ENCODE measurements at regions of chr17 and their contacts with region 1.

Region 1: GRCh38 chr17:60720763-60721531 is 43.3 kb downstream of the BCAS3 start:
- DNase-seq: peak; percentile 34
- H3K4me3 Mint-ChIP-seq: no peak overlapping the region
- H3K27ac Mint-ChIP-seq: no peak overlapping the region
- H3K4me1 Mint-ChIP-seq: peaks cover 8% of the 10 kb centered on the region
- H3K27me3 Mint-ChIP-seq: no peaks in the 10 kb centered on the region
- CTCF ChIP-seq: peak; percentile 66

Region 2: GRCh38 chr17:60678125-60678458 is 42.9 kb before region 1 on chr17:
- CTCF ChIA-PET with region 1: no interaction called
- intact Hi-C with region 1: no loop called
- DNase-seq: no peak
- H3K4me3 Mint-ChIP-seq: peak overlapping the region; percentile 99
- H3K27ac Mint-ChIP-seq: peak overlapping the region; percentile 72
- H3K4me1 Mint-ChIP-seq: no peaks in the 10 kb centered on the region
- H3K27me3 Mint-ChIP-seq: no peaks in the 10 kb centered on the region
- CTCF ChIP-seq: no peak

Region 3: DNA sequence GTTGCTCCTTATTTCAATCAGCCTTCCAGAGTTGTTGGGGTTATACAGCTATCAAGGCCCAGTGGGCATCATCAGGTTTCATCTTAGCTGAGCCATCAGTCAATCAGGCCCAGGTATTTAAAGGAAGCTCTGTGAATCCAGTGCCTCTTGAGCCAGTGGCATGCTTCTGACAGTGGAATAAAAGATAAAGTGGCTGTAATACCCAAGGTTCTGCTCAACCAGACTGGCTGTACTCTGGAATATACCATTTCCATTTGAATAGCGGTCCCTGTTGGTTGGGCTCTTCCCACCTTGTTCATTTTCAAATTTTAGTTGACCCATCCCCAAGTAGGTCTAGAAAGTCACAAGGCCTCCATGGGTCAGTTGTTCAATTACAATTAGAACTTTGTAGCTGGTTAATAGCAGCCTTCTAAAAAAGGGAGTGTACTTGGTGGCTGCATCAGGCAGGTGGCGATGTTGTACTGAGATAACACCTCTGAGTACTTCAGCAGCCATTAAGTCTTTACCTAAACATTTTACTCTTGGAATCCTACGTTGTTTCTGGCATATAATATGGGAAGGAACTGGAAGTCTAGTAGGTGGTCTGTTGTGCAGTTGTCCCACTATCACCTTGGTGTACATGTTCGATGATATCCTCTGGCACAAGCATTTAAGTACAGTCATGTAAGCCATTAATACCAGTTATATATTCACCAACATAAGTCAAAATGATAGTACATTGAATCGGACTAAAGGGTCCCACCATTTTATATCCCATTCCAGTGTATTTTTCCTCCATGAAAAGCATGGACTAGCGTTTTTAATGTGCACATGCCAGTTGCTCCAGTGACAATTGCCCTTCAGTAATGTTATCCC is 250.8 kb after region 1 on chr17:
- CTCF ChIA-PET with region 1: interaction called, 13 read pairs
- intact Hi-C with region 1: no loop called
- DNase-seq: peak; percentile 45
- H3K4me3 Mint-ChIP-seq: no peak overlapping the region
- H3K27ac Mint-ChIP-seq: no peak overlapping the region
- H3K4me1 Mint-ChIP-seq: no peaks in the 10 kb centered on the region
- H3K27me3 Mint-ChIP-seq: no peaks in the 10 kb centered on the region
- CTCF ChIP-seq: peak; percentile 36

Region 4: DNA sequence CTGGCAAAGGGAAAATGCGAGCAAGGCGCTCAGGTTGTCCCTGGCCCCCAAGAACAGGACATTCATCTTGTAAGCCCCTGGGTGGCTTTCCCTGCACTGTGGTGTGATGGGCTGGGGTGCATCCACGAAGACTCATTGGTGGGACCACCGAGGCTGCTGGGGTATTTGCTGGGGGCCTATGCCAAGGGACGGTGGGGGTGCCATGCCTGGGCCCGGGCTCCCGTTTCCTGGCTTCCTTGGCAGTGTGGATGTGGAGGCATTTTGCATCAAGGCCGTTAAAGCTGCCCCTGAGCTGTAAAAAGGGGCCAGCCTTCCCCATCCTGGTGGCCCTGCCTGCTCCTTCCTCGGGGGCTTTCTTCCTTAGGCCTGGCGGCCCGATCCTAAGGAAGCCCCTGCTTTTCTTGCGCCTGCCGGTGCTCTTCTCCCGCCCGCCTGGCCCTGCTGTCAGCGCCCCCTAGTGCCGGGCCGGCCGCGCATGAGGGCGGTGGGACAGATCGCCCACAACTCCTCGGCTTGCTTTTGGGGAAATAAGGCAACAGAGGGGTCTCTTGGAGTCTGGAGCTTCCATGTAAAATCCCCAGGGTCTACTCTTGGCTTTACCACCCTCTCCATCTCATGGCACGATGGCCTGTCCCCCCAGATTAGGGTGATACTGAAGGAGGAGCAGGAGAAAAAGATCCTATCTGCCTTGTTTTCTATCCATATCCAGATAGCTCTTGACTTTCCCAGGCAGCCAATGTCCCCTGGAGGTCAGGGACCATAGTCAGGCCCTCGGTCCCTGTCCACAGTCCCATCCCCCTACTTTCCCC is 668.9 kb after region 1 on chr17:
- CTCF ChIA-PET with region 1: no interaction called
- intact Hi-C with region 1: loop called (anchors 10 kb)
- DNase-seq: peak; percentile 65
- H3K4me3 Mint-ChIP-seq: no peak overlapping the region
- H3K27ac Mint-ChIP-seq: no peak overlapping the region
- H3K4me1 Mint-ChIP-seq: no peaks in the 10 kb centered on the region
- H3K27me3 Mint-ChIP-seq: peaks cover 14% of the 10 kb centered on the region
- CTCF ChIP-seq: peak; percentile 46

Measured in Calu3 (cell line).